Psoas muscle (tissue), 8 donors: ENCODE measurements at regions of chr11 and their contacts with region 1.

Region 1: GRCh38 chr11:1572197-1573076 is at the start of gene DUSP8:
- DNase-seq: peak; percentile 93 to 96
- ATAC-seq: peak; percentile 78 to 85 (median 84)
- H3K4me3 ChIP-seq: peak within 1 kb of the TSS; percentile 73
- H3K27ac ChIP-seq: peak within 1 kb of the TSS; percentile 91
- H3K4me1 ChIP-seq: peaks cover 11% of the 10 kb centered on the region
- H3K27me3 ChIP-seq: no peaks in the 10 kb centered on the region
- CTCF ChIP-seq: no peak
- total RNA-seq, gene DUSP8: 9.9 to 15.2 (median 14.0) TPM

Region 2: DNA sequence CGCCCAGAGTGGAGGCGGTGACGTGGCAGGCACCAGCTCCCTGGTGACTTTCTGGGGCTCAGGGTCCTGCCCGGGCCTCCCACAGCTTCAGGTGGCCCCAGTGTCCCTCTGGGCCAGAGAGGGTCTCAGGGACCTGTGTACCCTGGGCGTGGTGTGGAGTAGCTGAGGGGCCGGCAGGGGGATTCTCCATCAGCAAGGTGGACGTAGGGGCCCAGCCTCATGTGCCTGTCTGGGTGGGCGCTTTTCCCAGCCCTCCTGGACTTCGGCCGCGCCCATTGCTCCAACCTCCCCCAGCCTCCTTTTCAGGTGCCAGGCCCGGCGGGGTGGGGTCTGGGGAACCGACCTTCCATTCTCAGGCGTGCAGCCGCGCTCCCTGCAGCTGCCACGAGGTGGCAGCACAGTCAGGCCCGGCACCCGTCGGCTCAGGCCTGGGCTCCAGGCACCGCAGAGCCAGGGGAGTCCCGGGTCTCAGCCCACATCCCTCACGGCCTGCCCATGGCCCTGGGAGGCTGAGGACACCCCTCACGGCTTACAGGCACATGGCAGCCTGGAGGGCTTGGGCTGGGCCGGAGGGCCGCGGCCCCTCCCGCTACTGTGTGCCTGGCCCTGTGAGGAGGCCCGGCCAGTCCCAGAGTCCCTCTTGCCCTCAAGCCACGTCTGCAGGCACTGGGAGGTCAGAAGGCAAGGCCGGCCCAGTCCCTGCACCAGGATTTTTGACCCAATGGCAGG is 369.5 kb before region 1 on chr11:
- intact Hi-C with region 1: loop called (anchors 5 to 10 kb)
- DNase-seq: peak; percentile 68 to 76
- ATAC-seq: peak; percentile 73 to 89 (median 84)
- H3K4me3 ChIP-seq: no peak overlapping the region
- H3K27ac ChIP-seq: no peak overlapping the region
- H3K4me1 ChIP-seq: no peaks in the 10 kb centered on the region
- H3K27me3 ChIP-seq: peaks cover 0 to 47% (median 8%) of the 10 kb centered on the region in 3 donors
- CTCF ChIP-seq: peak; percentile 85

Region 3: DNA sequence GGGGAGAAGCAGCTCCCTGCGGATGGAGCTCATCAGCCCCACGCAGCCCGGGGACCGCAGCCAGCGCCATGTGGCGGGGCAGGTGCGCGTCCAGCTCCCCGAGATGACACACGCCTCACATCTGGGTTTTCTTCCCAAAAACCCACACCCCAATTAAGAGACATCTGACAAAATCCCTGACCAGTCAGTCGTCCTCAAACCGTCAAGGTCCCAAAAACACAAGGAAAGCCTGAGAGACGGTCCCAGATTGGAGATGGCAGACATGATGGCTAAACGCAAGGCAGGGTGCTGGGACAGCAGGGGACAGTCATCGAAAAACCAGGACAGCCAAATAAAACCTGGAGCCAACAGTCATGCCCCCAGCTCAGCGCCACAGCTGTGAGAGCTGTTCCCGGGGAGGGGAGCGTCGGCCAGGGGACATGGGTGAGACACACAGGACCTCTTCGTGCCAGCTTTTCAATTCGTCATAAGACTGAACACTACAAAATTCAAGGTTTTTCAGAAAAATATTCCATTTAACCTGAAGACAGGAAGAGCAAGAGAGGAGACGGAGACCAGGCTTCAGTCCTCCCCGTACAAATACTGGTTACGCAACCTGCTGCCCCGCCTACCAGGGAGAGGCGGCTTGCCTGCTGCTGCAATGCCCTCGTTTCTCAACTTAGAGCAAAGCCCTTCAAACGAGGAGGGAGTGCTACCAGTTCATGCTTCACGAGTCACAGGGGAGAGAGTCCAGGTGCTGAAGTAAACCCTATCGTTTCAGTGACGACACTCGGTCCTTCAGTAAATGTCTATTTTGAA is 273.5 kb before region 1 on chr11:
- intact Hi-C with region 1: loop called in 1 of 2 experiments (anchors 5 kb)
- DNase-seq: peak; percentile 89 to 94
- ATAC-seq: peak; percentile 79 to 86 (median 83)
- H3K4me3 ChIP-seq: peak overlapping the region; percentile 56
- H3K27ac ChIP-seq: peak overlapping the region; percentile 91
- H3K4me1 ChIP-seq: peaks cover 64% of the 10 kb centered on the region
- H3K27me3 ChIP-seq: no peaks in the 10 kb centered on the region
- CTCF ChIP-seq: no peak

Region 4: GRCh38 chr11:1335811-1336761 is 236.4 kb before region 1 on chr11:
- intact Hi-C with region 1: loop called in 1 of 2 experiments (anchors 5 kb)
- DNase-seq: peak; percentile 84 to 92
- ATAC-seq: peak; percentile 85 to 89 (median 87)
- H3K4me3 ChIP-seq: peak overlapping the region; percentile 64
- H3K27ac ChIP-seq: peak overlapping the region; percentile 91
- H3K4me1 ChIP-seq: peaks cover 10% of the 10 kb centered on the region
- H3K27me3 ChIP-seq: no peaks in the 10 kb centered on the region
- CTCF ChIP-seq: no peak

Region 5: GRCh38 chr11:1502954-1503707 is 69.3 kb before region 1 on chr11:
- intact Hi-C with region 1: no loop called
- DNase-seq: peak in 1 of 2 donors; percentile 59
- ATAC-seq: peak; percentile 23 to 45 (median 34)
- H3K4me3 ChIP-seq: no peak overlapping the region
- H3K27ac ChIP-seq: peak overlapping the region; percentile 39
- H3K4me1 ChIP-seq: peaks cover 67% of the 10 kb centered on the region
- H3K27me3 ChIP-seq: no peaks in the 10 kb centered on the region
- CTCF ChIP-seq: no peak

Region 6: GRCh38 chr11:1532014-1532586 is 40.3 kb before region 1 on chr11:
- intact Hi-C with region 1: loop called in 1 of 2 experiments (anchors 5 kb)
- DNase-seq: peak; percentile 78 to 91
- ATAC-seq: peak; percentile 88 to 90 (median 90)
- H3K4me3 ChIP-seq: peak overlapping the region; percentile 15
- H3K27ac ChIP-seq: peak overlapping the region; percentile 89
- H3K4me1 ChIP-seq: peaks cover 89% of the 10 kb centered on the region
- H3K27me3 ChIP-seq: no peaks in the 10 kb centered on the region
- CTCF ChIP-seq: no peak

Region 7: GRCh38 chr11:1546536-1547400 is 25.7 kb before region 1 on chr11:
- intact Hi-C with region 1: loop called (anchors 1 to 2 kb)
- DNase-seq: peak; percentile 55 to 76
- ATAC-seq: peak; percentile 76 to 79 (median 78)
- H3K4me3 ChIP-seq: peak overlapping the region; percentile 63
- H3K27ac ChIP-seq: peak overlapping the region; percentile 86
- H3K4me1 ChIP-seq: peaks cover 21% of the 10 kb centered on the region
- H3K27me3 ChIP-seq: peaks cover 0 to 6% (median 0%) of the 10 kb centered on the region in 3 donors
- CTCF ChIP-seq: peak; percentile 80